Naive thymus-derived CD4-positive, alpha-beta T cell (primary cell): ENCODE measurements at regions of chr12 and their contacts with region 1.

Region 1: GRCh38 chr12:27523642-27524493 is at the start of gene PPFIBP1:
- DNase-seq: peak; percentile 81 to 95 (median 88)
- ATAC-seq: peak; percentile 99
- H3K4me3 ChIP-seq: peak within 1 kb of the TSS; percentile 78
- H3K4me3 Mint-ChIP-seq: peak within 1 kb of the TSS; percentile 95 to 99 (median 98)
- H3K27ac ChIP-seq: peak within 1 kb of the TSS; percentile 82
- H3K27ac Mint-ChIP-seq: peak within 1 kb of the TSS; percentile 89 to 99 (median 98)
- H3K4me1 ChIP-seq: peaks cover 5 to 7% of the 10 kb centered on the region in 2 donors
- H3K4me1 Mint-ChIP-seq: peaks cover 12 to 43% (median 28%) of the 10 kb centered on the region in 7 donors
- H3K27me3 ChIP-seq: no peaks in the 10 kb centered on the region
- H3K27me3 Mint-ChIP-seq: peaks cover 0 to 39% (median 7%) of the 10 kb centered on the region in 5 donors
- total RNA-seq, gene PPFIBP1: 3.3 to 29.2 (median 7.5) TPM

Region 2: GRCh38 chr12:27024291-27024690 is 499.6 kb before region 1 on chr12:
- CTCF ChIA-PET with region 1: no interaction called
- POLR2A ChIA-PET with region 1: interaction called, 6 read pairs
- intact Hi-C with region 1: loop called in 1 of 2 experiments (anchors 5 kb)
- DNase-seq: no peak
- ATAC-seq: no peak
- H3K4me3 ChIP-seq: no peak overlapping the region
- H3K4me3 Mint-ChIP-seq: peak overlapping the region; percentile 34 to 100 (median 96)
- H3K27ac ChIP-seq: no peak overlapping the region
- H3K27ac Mint-ChIP-seq: no peak overlapping the region
- H3K4me1 ChIP-seq: peaks cover 17 to 25% of the 10 kb centered on the region in 2 donors
- H3K4me1 Mint-ChIP-seq: peaks cover 28 to 47% (median 43%) of the 10 kb centered on the region in 7 donors
- H3K27me3 ChIP-seq: no peaks in the 10 kb centered on the region
- H3K27me3 Mint-ChIP-seq: peaks cover 0 to 4% (median 0%) of the 10 kb centered on the region in 5 donors

Region 3: GRCh38 chr12:27434673-27435565 is 88.9 kb before region 1 on chr12:
- CTCF ChIA-PET with region 1: no interaction called
- POLR2A ChIA-PET with region 1: no interaction called
- intact Hi-C with region 1: loop called (anchors 1 kb)
- DNase-seq: peak in 6 of 9 donors; percentile 2 to 28 (median 18)
- ATAC-seq: peak; percentile 74
- H3K4me3 ChIP-seq: no peak overlapping the region
- H3K4me3 Mint-ChIP-seq: peak overlapping the region in 1 of 10 donors; percentile 29
- H3K27ac ChIP-seq: no peak overlapping the region
- H3K27ac Mint-ChIP-seq: peak overlapping the region in 3 of 9 donors; percentile 32 to 81 (median 33)
- H3K4me1 ChIP-seq: no peaks in the 10 kb centered on the region
- H3K4me1 Mint-ChIP-seq: peaks cover 7 to 47% (median 10%) of the 10 kb centered on the region in 7 donors
- H3K27me3 ChIP-seq: no peaks in the 10 kb centered on the region
- H3K27me3 Mint-ChIP-seq: peaks cover 0 to 18% (median 13%) of the 10 kb centered on the region in 5 donors

Region 4: DNA sequence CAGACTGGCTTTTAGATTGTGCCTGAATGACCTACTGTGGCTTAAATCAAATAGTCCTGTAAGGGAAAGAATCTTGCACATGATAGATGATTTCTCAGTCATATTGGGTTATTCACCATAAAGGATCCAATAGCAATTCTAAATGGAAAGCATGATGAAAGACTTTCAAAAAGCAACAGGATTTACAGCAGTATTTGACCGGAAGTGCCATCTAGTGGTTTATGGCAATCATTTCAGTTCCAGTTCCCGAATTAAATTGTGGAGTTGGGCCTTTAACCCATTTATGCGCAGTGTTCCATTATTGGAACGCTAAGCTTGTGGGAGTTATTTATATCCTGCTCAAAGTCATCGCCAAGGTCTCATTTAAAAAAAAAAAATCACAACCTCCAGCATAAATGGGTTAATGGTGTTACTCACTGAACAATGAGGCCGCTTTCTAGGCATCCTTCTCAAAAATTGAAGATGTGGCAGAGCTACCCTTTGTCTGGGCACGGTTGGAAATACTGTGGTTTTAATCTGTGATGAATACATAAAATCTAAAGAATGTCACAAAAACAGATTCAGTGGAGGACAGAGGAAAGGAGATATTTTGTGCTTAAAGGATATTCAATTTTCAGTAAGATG is 111.6 kb after region 1 on chr12:
- CTCF ChIA-PET with region 1: no interaction called
- POLR2A ChIA-PET with region 1: no interaction called
- intact Hi-C with region 1: loop called (anchors 5 to 10 kb)
- DNase-seq: no peak
- ATAC-seq: no peak
- H3K4me3 ChIP-seq: no peak overlapping the region
- H3K4me3 Mint-ChIP-seq: no peak overlapping the region
- H3K27ac ChIP-seq: no peak overlapping the region
- H3K27ac Mint-ChIP-seq: no peak overlapping the region
- H3K4me1 ChIP-seq: no peaks in the 10 kb centered on the region
- H3K4me1 Mint-ChIP-seq: peaks cover 0 to 7% (median 0%) of the 10 kb centered on the region in 7 donors
- H3K27me3 ChIP-seq: no peaks in the 10 kb centered on the region
- H3K27me3 Mint-ChIP-seq: no peaks in the 10 kb centered on the region

Region 5: GRCh38 chr12:27779920-27780611 is 256.2 kb after region 1 on chr12 and contains the starts of genes KLHL42 and MANSC4:
- CTCF ChIA-PET with region 1: no interaction called
- POLR2A ChIA-PET with region 1: no interaction called
- intact Hi-C with region 1: loop called (anchors 5 to 10 kb)
- DNase-seq: peak; percentile 52 to 73 (median 70)
- ATAC-seq: peak; percentile 90
- H3K4me3 ChIP-seq: peak within 1 kb of the TSS; percentile 81
- H3K4me3 Mint-ChIP-seq: peak within 1 kb of the TSS; percentile 84 to 94 (median 91)
- H3K27ac ChIP-seq: peak within 1 kb of the TSS; percentile 76
- H3K27ac Mint-ChIP-seq: peak within 1 kb of the TSS; percentile 74 to 94 (median 88)
- H3K4me1 ChIP-seq: peaks cover 5 to 12% of the 10 kb centered on the region in 2 donors
- H3K4me1 Mint-ChIP-seq: peaks cover 18 to 43% (median 38%) of the 10 kb centered on the region in 7 donors
- H3K27me3 ChIP-seq: no peaks in the 10 kb centered on the region
- H3K27me3 Mint-ChIP-seq: peaks cover 0 to 18% (median 0%) of the 10 kb centered on the region in 5 donors
- total RNA-seq, gene KLHL42: 16.0 to 27.0 (median 18.4) TPM
- total RNA-seq, gene MANSC4: 0.64 TPM in 1 of 5 experiments, not detected in the others

Region 6: DNA sequence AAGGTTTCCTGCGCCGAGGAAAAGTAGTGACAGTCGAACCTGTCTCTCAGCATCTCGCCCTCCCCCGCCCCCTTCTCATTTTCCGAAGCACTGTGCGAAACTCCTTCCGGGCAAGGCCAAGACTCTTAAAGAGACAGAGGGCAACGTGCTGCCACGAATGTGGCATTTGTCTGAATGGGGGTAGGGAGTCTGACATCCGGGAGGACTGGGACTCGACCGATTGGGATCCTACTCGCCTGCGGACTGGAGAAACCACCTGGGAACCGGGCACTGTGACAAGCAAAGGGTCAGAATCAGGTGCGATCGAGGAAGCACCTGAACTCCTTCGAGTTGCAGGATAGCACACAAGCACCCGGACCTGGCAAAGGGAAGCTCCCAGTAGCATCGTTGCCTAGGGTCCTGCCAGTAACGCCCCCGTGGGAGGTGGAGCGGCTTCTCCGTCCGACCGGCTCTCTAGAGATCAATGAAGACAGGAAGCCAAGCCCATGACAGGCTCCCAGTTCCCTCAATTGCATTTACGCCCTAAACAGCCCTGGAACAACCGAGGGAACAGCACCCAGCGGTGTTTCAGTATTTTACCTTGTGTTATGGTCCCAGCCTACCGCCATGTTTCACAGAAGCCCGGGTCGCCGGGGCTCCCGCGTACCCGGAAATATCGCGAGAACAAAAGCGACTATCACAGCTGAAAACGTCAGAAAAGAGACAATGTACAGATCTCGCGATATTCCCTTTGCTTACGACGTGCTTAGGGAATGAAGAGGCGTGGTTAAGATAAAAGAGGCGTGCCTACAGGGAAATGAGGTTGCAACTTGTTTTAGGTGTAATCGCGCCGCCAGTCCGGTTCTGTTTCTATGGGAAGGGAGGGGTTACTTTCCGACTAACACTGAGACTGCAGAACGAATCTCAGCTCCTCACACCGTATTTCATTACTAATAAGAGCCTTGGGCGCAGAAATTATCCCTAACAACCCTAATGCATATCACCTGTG is 1857.0 kb after region 1 on chr12 and contains the start of gene ERGIC2:
- CTCF ChIA-PET with region 1: no interaction called
- POLR2A ChIA-PET with region 1: no interaction called
- intact Hi-C with region 1: loop called in 1 of 2 experiments (anchors 1 kb)
- DNase-seq: peak; percentile 63 to 97 (median 95)
- ATAC-seq: peak; percentile 97
- H3K4me3 ChIP-seq: peak within 1 kb of the TSS; percentile 98
- H3K4me3 Mint-ChIP-seq: peak within 1 kb of the TSS; percentile 88 to 97 (median 94)
- H3K27ac ChIP-seq: peak within 1 kb of the TSS; percentile 91
- H3K27ac Mint-ChIP-seq: peak within 1 kb of the TSS; percentile 92 to 98 (median 96)
- H3K4me1 ChIP-seq: peaks cover 9 to 12% of the 10 kb centered on the region in 2 donors
- H3K4me1 Mint-ChIP-seq: peaks cover 20 to 63% (median 46%) of the 10 kb centered on the region in 7 donors
- H3K27me3 ChIP-seq: no peaks in the 10 kb centered on the region
- H3K27me3 Mint-ChIP-seq: no peaks in the 10 kb centered on the region
- total RNA-seq, gene ERGIC2: 36.0 to 85.7 (median 78.6) TPM